ENCODE measurements at regions of chr12 and their contacts with region 1.

Region 1: DNA sequence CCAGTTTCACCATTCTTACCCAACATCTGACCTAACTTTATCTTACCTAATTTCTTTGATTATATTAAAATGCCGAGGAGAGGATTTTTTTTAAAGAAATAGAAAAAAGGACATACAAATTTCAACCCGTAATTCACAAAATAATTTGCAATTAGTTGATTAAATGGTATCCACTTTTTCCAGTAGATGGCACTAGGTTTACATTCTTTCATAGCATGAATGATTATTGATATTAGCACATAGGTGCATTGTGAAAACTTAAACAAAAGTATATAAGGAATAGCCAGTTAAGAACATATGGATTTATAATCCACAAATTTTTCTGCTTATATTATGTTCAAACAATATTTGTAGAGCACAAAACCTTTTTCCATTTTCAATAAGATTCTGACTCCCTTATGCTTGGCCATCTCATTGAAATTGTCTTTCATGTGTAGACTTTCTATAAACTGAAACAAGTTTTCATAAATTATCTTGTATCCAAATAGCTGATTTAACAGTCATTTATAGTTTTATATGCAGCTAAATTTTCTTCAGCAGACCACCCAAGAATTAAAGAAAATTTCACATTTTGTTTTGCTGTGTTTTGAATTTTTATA is 35.3 kb downstream of the MSRB3 start:
- DNase-seq: no peak
- ATAC-seq: no peak
- H3K4me3 ChIP-seq: no peak overlapping the region
- H3K27ac ChIP-seq: no peak overlapping the region
- H3K4me1 ChIP-seq: no peaks in the 10 kb centered on the region
- H3K27me3 ChIP-seq: no peaks in the 10 kb centered on the region
- CTCF ChIP-seq: peak; percentile 29 to 72 (median 59)
- POLR2A ChIP-seq: no peak

Region 2: DNA sequence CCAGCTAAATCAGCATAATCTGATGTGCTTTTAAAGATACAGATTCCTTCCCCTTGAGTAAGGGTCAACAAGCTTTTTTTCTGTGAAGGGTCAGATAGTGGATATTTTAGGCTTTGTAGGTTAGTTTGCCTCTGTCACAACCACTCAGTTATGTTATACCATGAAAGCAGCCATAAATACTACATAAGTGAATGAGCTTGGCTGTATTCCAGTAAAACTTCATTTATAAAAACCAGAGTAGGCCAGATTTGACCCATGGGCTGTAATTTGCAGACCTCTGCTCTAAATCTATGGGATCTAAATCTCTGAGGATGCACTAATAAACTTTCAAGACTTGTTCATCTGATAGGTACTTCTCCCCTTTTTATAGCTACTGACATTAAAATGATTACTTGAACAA is 96.7 kb before region 1 on chr12:
- intact Hi-C with region 1: no loop called
- DNase-seq: no peak
- ATAC-seq: no peak
- H3K4me3 ChIP-seq: no peak overlapping the region
- H3K27ac ChIP-seq: no peak overlapping the region
- H3K4me1 ChIP-seq: no peaks in the 10 kb centered on the region
- H3K27me3 ChIP-seq: no peaks in the 10 kb centered on the region
- CTCF ChIP-seq: no peak
- POLR2A ChIP-seq: no peak

Region 3: GRCh38 chr12:65403188-65403587 is 89.4 kb after region 1 on chr12:
- intact Hi-C with region 1: no loop called
- DNase-seq: no peak
- ATAC-seq: no peak
- H3K4me3 ChIP-seq: no peak overlapping the region
- H3K27ac ChIP-seq: no peak overlapping the region
- H3K4me1 ChIP-seq: no peaks in the 10 kb centered on the region
- H3K27me3 ChIP-seq: no peaks in the 10 kb centered on the region
- CTCF ChIP-seq: no peak
- POLR2A ChIP-seq: no peak

Region 4: DNA sequence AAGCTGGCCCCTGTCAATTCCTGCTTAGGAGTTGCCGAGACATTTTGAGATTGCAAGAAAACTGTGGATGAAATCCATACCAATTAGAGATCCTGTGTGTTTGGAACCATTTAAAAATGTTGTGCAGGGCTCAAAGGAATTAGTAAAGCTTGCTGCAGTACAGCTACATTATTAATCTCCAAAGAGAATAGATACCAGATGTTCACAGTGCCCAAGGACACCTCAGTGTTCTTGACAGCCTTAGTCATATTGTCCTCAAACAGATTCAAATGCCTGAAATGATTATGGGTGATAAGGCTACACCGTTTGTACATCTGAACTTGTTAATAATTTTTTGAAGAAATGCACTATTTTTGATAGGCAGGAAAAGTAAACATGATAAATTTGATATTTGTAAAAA is 129.2 kb after region 1 on chr12:
- intact Hi-C with region 1: no loop called
- DNase-seq: no peak
- ATAC-seq: no peak
- H3K4me3 ChIP-seq: no peak overlapping the region
- H3K27ac ChIP-seq: no peak overlapping the region
- H3K4me1 ChIP-seq: no peaks in the 10 kb centered on the region
- H3K27me3 ChIP-seq: no peaks in the 10 kb centered on the region
- CTCF ChIP-seq: no peak
- POLR2A ChIP-seq: no peak

Region 5: DNA sequence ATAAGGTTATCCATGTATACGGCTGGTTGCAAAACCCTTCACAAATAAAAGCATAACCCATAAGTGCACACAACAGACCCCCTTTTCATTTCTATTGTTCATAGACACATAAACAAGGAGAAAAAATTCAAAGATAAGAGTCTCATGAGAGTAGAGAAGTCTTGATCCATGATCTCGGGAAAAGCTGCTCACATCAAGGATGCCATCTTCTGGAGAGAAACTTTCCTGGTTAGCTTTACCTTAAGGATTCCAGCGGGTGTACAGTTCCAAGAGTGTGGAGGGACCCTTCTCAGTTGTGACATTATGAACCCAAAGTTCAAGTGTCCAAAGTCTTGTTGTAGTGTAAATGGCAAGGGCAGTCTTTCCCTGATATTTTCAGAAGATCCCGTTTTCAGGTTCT is 672.2 kb after region 1 on chr12:
- intact Hi-C with region 1: loop called (anchors 10 kb)
- DNase-seq: no peak
- ATAC-seq: no peak
- H3K4me3 ChIP-seq: no peak overlapping the region
- H3K27ac ChIP-seq: no peak overlapping the region
- H3K4me1 ChIP-seq: no peaks in the 10 kb centered on the region
- H3K27me3 ChIP-seq: no peaks in the 10 kb centered on the region
- CTCF ChIP-seq: no peak
- POLR2A ChIP-seq: no peak

Region 6: GRCh38 chr12:66119870-66120241 is 806.0 kb after region 1 on chr12:
- intact Hi-C with region 1: no loop called
- DNase-seq: no peak
- ATAC-seq: no peak
- H3K4me3 ChIP-seq: no peak overlapping the region
- H3K27ac ChIP-seq: no peak overlapping the region
- H3K4me1 ChIP-seq: no peaks in the 10 kb centered on the region
- H3K27me3 ChIP-seq: no peaks in the 10 kb centered on the region
- CTCF ChIP-seq: no peak
- POLR2A ChIP-seq: no peak

Measured in body of pancreas (tissue), 4 donors.